Posterior vena cava (tissue), 2 donors: ENCODE measurements at regions of chr6 and their contacts with region 1.

Region 1: GRCh38 chr6:116887168-116887567 is 10.1 kb downstream of the RFX6 start:
- DNase-seq: no peak

Region 2: DNA sequence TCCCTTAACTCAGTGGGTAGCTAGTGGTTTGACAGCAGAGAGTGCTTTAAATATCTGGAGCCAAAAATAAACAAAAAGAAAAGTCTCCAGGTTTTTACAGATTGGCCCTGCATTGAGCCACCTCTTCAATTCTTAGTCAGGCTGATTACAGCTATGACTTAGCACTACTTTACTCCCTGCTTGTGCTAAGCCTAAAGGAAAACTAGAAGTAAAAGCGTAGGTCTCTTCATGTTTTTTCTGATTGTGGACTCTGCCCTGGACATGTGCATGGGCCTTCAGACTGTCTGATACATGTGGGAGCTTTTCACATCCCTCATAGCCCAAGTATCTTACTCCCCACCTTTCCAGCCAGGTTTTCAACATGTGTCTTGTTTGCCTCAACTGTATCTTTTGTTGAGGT is 172.9 kb before region 1 on chr6:
- intact Hi-C with region 1: no loop called
- DNase-seq: no peak

Region 3: GRCh38 chr6:116773886-116774285 is 113.3 kb before region 1 on chr6:
- intact Hi-C with region 1: no loop called
- DNase-seq: no peak

Region 4: GRCh38 chr6:116801971-116802370 is 85.2 kb before region 1 on chr6:
- intact Hi-C with region 1: no loop called
- DNase-seq: no peak

Region 5: GRCh38 chr6:116876635-116877611 is 10.2 kb before region 1 on chr6 and contains the start of gene RFX6:
- intact Hi-C with region 1: loop called in 1 of 2 experiments (anchors 1 kb)
- DNase-seq: peak; percentile 68
- total RNA-seq, gene RFX6: not detected

Region 6: GRCh38 chr6:117025310-117025709 is 138.1 kb after region 1 on chr6:
- intact Hi-C with region 1: no loop called
- DNase-seq: no peak